Activated naive CD4-positive, alpha-beta T cell treated with anti-CD3 and anti-CD28 coated beads for 36 hours (primary cell): ENCODE measurements at regions of chr16 and their contacts with region 1.

Region 1: DNA sequence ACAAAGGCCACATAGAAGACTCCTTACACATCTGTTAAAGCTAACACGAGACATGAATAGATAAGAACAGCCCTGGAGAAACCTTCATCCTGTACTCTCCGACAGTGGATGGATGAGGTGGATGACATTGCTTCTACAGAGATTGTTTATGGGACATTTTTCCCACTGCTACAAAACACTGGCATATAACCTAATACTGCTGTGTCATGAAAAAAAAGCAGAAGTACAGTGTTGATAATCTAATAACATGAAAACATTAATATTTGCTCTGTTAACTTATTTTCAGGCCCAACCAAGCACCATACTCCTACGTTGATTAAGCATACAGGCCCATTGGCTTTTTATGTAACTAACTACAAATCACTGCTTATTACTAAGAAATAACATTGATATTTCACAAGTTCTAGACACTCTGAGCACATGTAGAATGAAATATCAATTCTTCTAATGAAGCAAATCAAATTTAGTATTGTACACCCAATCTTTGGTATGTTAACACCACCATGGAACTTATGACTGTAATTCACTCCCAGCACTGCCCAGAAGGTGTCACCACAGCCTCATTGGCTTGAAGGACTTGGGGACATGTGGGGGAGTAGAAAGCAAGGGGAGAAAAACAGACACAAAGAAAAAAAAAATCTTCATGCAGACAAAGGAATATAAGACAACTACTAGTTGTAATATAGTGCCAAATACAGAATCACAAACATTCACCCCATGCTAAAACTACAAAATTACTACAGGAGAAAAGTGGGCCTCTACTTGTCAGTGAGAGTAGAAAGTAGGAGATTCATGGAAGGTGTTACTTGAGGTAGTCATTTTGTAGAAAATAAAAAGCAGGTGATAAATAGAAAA is 330.0 kb upstream of the PMFBP1 start:
- DNase-seq: peak; percentile 69
- H3K4me3 Mint-ChIP-seq: no peak overlapping the region
- H3K27ac Mint-ChIP-seq: no peak overlapping the region
- H3K4me1 Mint-ChIP-seq: peaks cover 3% of the 10 kb centered on the region
- H3K27me3 Mint-ChIP-seq: no peaks in the 10 kb centered on the region

Region 2: GRCh38 chr16:71676236-71676635 is 825.7 kb before region 1 on chr16:
- CTCF ChIA-PET with region 1: no interaction called
- intact Hi-C with region 1: no loop called
- DNase-seq: no peak
- H3K4me3 Mint-ChIP-seq: no peak overlapping the region
- H3K27ac Mint-ChIP-seq: no peak overlapping the region
- H3K4me1 Mint-ChIP-seq: peaks cover 6% of the 10 kb centered on the region
- H3K27me3 Mint-ChIP-seq: no peaks in the 10 kb centered on the region

Region 3: GRCh38 chr16:72455743-72456659 is 46.0 kb before region 1 on chr16:
- CTCF ChIA-PET with region 1: no interaction called
- intact Hi-C with region 1: no loop called
- DNase-seq: no peak
- H3K4me3 Mint-ChIP-seq: no peak overlapping the region
- H3K27ac Mint-ChIP-seq: no peak overlapping the region
- H3K4me1 Mint-ChIP-seq: no peaks in the 10 kb centered on the region
- H3K27me3 Mint-ChIP-seq: no peaks in the 10 kb centered on the region

Region 4: DNA sequence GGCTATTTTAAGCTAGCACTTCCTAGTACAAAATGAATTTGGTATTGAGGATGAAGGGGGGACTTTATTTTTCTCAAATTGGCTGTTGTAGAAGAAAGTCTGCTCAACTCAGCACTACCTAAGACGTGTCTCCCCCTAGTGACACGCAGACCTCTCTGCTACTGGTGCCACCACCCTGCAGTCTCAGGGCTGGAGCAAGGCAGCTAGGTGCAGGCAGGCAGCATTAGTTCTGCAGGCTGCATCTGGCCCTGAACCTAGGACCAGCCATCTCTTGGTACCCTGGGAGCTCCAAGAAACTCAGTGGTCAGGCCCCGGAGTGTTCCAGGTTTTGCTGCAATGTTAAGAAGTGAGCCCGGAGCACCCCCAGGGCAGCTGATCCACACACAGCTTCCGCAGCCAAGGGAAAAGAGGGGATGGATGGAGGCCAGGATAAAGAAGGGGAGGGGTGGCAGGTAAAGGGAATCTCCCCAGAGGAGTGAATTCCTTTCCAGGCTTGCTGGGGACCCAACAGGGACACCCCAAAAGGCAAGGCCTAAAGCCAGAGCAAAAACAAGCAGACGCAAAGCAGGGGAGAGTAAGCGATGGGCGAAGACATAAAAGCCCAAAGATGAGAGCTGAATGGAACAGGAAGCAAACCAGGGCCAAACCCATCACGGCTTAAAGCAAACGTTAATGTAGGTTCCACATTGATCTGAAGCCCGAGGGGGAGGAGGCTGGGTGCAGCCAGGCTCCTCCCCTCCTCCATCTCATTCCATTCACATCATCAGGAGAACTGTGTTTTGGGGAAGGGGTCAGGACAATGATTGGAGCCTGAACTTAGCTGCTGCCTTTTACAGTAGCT is 345.4 kb after region 1 on chr16:
- CTCF ChIA-PET with region 1: interaction called, 3 read pairs
- intact Hi-C with region 1: loop called (anchors 1 kb)
- DNase-seq: peak; percentile 33
- H3K4me3 Mint-ChIP-seq: no peak overlapping the region
- H3K27ac Mint-ChIP-seq: no peak overlapping the region
- H3K4me1 Mint-ChIP-seq: peaks cover 6% of the 10 kb centered on the region
- H3K27me3 Mint-ChIP-seq: peaks cover 6% of the 10 kb centered on the region

Region 5: GRCh38 chr16:73878611-73879010 is 1376.6 kb after region 1 on chr16:
- CTCF ChIA-PET with region 1: interaction called, 3 read pairs
- intact Hi-C with region 1: loop called (anchors 2 kb)
- DNase-seq: no peak
- H3K4me3 Mint-ChIP-seq: no peak overlapping the region
- H3K27ac Mint-ChIP-seq: no peak overlapping the region
- H3K4me1 Mint-ChIP-seq: no peaks in the 10 kb centered on the region
- H3K27me3 Mint-ChIP-seq: peaks cover 6% of the 10 kb centered on the region

Region 6: DNA sequence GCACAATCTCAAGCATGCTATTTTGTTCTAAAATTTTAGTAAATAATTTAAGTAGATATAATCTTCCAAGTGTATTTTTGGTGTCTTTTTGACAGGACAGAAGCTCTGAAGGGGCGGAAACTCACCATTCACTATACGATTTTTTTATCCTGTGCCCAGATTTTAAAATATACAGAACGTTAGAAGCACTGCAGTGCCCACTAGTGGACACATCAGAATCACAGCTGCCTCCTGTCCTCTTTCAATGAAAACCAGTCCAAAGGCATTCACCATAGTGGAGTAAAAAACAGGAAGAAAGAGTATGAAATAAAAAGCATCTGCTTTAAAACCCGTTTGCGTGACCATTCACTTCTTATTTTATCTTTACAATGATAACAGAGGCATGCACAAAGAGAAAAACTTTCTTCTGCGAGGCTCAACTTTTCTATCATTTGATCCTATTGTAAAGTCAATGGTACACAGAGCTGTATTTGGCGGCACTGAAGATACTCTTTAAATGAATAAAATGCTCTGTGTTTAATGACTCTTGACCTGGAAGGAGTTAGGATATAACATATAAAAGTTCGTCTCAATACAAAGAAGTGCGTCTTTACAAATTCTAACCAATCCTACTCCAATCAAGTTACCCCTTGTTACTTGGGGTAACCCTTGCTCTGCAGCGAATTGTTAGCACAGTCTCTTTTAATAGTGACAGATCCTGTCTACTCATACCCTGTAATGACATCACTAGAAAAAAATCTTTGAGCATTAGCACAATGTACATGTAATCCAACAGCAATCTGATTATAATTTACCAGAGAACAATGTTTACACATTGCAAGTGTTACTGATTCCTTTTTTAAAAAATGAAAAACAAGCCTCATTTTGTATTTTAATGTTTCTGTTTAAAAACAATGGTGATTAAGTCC is 1454.9 kb after region 1 on chr16:
- CTCF ChIA-PET with region 1: no interaction called
- intact Hi-C with region 1: loop called (anchors 5 kb)
- DNase-seq: peak; percentile 65
- H3K4me3 Mint-ChIP-seq: no peak overlapping the region
- H3K27ac Mint-ChIP-seq: no peak overlapping the region
- H3K4me1 Mint-ChIP-seq: no peaks in the 10 kb centered on the region
- H3K27me3 Mint-ChIP-seq: peaks cover 2% of the 10 kb centered on the region